ENCODE measurements at regions of chr7 and their contacts with region 1.

Region 1: DNA sequence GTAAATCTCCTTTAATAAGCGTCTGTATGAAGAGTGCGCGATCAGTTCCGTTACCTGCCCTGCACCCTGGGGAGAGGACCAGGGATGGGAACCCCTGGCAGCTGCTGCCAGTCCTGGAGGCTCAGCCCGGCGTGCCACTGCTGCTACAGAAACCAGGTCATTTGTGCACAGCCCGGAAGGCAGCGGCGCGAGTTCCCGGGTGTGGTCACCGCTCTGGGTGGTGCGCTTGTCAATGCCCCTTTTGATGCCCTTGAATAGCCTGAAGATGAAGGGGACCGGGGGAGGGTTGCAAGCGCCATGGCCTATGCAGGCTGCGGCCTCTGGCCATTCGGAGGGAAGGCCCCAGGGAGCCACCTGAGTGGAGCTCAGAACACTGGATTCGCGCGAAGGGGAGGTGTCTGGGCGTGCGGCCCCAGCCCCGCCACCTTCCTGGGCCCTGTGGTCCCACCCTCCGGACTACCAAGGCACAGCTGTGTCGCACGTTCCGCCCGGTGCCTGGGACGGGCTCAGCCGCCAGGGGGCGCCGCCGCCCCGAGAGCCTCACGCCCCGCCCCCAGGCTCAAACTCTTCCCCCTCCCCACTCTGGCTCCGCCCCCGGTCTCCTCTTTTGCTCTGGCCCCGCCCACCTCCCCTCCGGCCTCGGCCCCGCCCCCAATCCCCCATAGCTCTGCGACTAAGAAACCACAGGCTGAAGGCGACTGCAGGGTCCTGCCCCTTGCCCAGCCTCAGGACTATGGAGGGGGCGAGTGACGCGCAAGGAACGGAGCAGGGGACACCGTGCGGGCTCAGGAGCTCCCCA is 16.5 kb downstream of the AP5Z1 start:
- DNase-seq: peak; percentile 71 to 80 (median 74)
- H3K4me3 ChIP-seq: peak overlapping the region; percentile 19
- H3K4me3 Mint-ChIP-seq: peak overlapping the region in 2 of 7 donors; percentile 20 to 25
- H3K27ac ChIP-seq: no peak overlapping the region
- H3K27ac Mint-ChIP-seq: peak overlapping the region in 2 of 8 donors; percentile 17 to 39
- H3K4me1 ChIP-seq: no peaks in the 10 kb centered on the region
- H3K4me1 Mint-ChIP-seq: peaks cover 0 to 15% (median 1%) of the 10 kb centered on the region in 3 donors
- H3K27me3 ChIP-seq: no peaks in the 10 kb centered on the region
- H3K27me3 Mint-ChIP-seq: no peaks in the 10 kb centered on the region

Region 2: GRCh38 chr7:4681886-4682620 is 109.9 kb before region 1 on chr7 and contains the start of gene FOXK1:
- CTCF ChIA-PET with region 1: no interaction called
- POLR2A ChIA-PET with region 1: no interaction called
- DNase-seq: peak; percentile 70 to 82 (median 75)
- H3K4me3 ChIP-seq: peak within 1 kb of the TSS; percentile 57
- H3K4me3 Mint-ChIP-seq: peak within 1 kb of the TSS; percentile 87 to 100 (median 97)
- H3K27ac ChIP-seq: peak within 1 kb of the TSS; percentile 78
- H3K27ac Mint-ChIP-seq: peak within 1 kb of the TSS; percentile 87 to 100 (median 96)
- H3K4me1 ChIP-seq: peaks cover 30% of the 10 kb centered on the region
- H3K4me1 Mint-ChIP-seq: peaks cover 28 to 35% (median 35%) of the 10 kb centered on the region in 3 donors
- H3K27me3 ChIP-seq: no peaks in the 10 kb centered on the region
- H3K27me3 Mint-ChIP-seq: peaks cover 4 to 8% of the 10 kb centered on the region in 2 donors
- total RNA-seq, gene FOXK1: 35.6 to 38.4 TPM

Region 3: GRCh38 chr7:4775250-4775847 is 16.6 kb before region 1 on chr7 and contains the start of gene AP5Z1:
- CTCF ChIA-PET with region 1: interaction called, 16 read pairs
- POLR2A ChIA-PET with region 1: interaction called, 10 read pairs
- DNase-seq: peak; percentile 95 to 97 (median 96)
- H3K4me3 ChIP-seq: peak within 1 kb of the TSS; percentile 100
- H3K4me3 Mint-ChIP-seq: peak within 1 kb of the TSS; percentile 97 to 99 (median 99)
- H3K27ac ChIP-seq: peak within 1 kb of the TSS; percentile 93
- H3K27ac Mint-ChIP-seq: peak within 1 kb of the TSS; percentile 97 to 99 (median 99)
- H3K4me1 ChIP-seq: peaks cover 32% of the 10 kb centered on the region
- H3K4me1 Mint-ChIP-seq: peaks cover 33 to 59% (median 46%) of the 10 kb centered on the region in 3 donors
- H3K27me3 ChIP-seq: no peaks in the 10 kb centered on the region
- H3K27me3 Mint-ChIP-seq: peaks cover 0 to 2% of the 10 kb centered on the region in 2 donors
- total RNA-seq, gene AP5Z1: 47.8 to 49.8 TPM